Cardiac septum (tissue), 1 donor: ENCODE measurements at regions of chr11 and their contacts with region 1.

Region 1: GRCh38 chr11:60899046-60899936 is 7.1 kb downstream of the PRPF19 start:
- DNase-seq: no peak

Region 2: DNA sequence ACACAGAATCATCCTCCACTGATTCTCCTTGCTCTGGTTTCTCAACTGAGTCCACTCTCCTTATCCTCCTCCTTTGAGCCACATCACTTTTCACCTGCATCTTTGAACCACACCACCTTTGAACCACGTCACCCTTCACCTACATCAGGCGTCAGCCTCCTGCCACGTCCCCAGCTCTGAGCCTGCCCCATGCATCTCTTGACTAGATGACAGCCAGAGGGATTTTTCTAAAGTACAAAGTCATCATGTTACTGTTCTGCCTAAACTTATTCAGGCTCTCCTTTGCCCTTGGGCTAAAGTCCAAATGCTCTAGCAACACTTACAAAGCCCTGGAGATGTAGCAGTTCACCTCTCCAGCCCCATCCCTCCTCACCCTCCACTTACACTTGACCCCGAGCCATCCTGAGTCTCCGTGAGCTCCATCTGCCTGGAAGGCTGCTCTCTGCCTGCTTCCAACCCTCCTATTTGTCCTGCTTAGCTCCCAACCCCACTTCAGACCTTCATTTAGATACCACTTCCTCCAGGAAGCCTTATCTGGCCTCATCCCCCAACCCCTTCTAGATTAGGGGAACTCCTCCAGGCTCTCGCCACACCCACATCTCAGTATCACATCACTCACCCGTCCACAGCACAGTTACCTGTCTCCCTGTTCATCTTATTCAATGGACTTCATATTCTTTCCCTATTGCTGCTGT is 117.9 kb before region 1 on chr11:
- intact Hi-C with region 1: loop called (anchors 5 kb)
- DNase-seq: no peak

Region 3: DNA sequence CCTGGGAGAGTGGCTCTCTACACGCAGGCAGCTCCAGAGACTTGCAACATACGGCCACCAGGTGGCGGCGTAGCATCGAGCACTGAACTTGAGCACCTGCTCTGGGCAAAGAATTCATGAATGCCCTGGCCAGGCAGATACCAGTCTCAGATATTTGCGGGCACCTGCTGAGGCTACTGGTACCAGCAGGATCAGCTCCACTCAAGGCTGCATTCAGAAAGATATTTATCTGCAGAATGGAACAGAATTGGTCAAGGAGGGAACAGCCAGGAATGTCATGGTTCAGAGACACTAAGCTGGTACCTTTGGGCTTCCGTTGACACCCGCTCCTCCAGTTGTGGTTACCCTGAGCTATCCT is 68.2 kb before region 1 on chr11:
- intact Hi-C with region 1: loop called (anchors 2 kb)
- DNase-seq: peak; percentile 91